Psoas muscle (tissue), 8 donors: ENCODE measurements at regions of chr2 and their contacts with region 1.

Region 1: DNA sequence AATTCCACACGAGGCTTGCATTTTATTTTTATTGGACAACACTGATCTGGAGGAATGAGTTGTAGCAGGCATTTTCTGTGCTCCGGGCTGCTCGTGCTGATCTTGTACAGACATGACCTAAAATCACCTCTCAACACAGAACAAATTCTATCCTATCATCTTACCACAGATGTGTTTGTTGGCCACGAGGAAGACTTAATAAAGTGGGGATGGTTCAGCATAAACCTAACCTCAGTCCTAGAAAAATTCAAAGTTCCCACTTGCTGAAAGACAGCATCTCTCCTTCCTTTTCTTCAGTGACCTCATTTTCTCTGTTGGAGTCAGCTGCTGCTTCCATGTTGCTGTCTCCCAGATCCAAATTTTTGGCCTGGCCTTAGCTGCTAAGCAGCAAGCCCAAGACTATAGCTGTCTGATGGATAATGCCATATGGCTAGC is 45.3 kb downstream of the RBKS start:
- DNase-seq: no peak
- ATAC-seq: peak; percentile 56 to 83 (median 64)
- H3K4me3 ChIP-seq: no peak overlapping the region
- H3K27ac ChIP-seq: peak overlapping the region; percentile 60
- H3K4me1 ChIP-seq: peaks cover 26% of the 10 kb centered on the region
- H3K27me3 ChIP-seq: no peaks in the 10 kb centered on the region
- CTCF ChIP-seq: no peak

Region 2: GRCh38 chr2:27807476-27807875 is 37.4 kb before region 1 on chr2:
- intact Hi-C with region 1: loop called in 1 of 2 experiments (anchors 5 kb)
- DNase-seq: no peak
- ATAC-seq: peak in 3 of 4 donors; percentile 46 to 58 (median 56)
- H3K4me3 ChIP-seq: no peak overlapping the region
- H3K27ac ChIP-seq: no peak overlapping the region
- H3K4me1 ChIP-seq: peaks cover 11% of the 10 kb centered on the region
- H3K27me3 ChIP-seq: no peaks in the 10 kb centered on the region
- CTCF ChIP-seq: peak; percentile 45